ENCODE measurements at regions of chr1 and their contacts with region 1.

Region 1: GRCh38 chr1:156096640-156097391 is 14.6 kb upstream of the MEX3A start:
- DNase-seq: peak; percentile 85
- ATAC-seq: peak; percentile 86
- H3K4me3 Mint-ChIP-seq: peak overlapping the region; percentile 75
- H3K27ac Mint-ChIP-seq: peak overlapping the region; percentile 99
- H3K4me1 Mint-ChIP-seq: peaks cover 36% of the 10 kb centered on the region
- H3K27me3 Mint-ChIP-seq: no peaks in the 10 kb centered on the region
- CTCF ChIP-seq: no peak

Region 2: DNA sequence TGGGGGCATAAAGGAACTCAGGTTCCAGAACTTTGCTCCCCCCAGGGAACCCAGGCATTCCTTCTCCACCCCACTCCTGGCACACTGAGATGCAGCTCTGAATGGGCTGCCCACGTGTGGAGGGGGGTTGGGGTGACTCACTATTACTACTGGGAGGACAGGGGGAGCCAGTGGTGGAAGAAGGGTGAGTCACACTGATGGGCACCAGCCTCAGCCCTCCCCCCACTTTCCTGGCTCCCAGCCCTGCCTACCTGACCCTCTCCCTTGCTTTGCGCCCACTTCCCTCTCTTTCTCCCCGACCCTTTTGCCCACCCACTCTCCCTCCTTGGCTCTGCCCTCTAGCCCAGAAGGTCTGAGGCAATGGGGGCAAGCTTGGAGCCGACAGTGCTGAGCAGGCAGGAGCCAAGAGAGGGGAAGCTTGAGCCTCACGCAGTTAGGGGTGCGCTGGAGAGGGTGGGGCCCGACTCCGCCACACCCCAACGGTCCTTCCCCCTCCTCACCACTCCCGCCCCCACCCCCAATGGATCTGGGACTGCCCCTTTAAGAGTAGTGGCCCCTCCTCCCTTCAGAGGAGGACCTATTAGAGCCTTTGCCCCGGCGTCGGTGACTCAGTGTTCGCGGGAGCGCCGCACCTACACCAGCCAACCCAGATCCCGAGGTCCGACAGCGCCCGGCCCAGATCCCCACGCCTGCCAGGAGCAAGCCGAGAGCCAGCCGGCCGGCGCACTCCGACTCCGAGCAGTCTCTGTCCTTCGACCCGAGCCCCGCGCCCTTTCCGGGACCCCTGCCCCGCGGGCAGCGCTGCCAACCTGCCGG is 17.5 kb after region 1 on chr1 and contains the start of gene LMNA:
- CTCF ChIA-PET with region 1: interaction called, 17 read pairs
- POLR2A ChIA-PET with region 1: interaction called, 78 read pairs
- intact Hi-C with region 1: loop called (anchors 1 kb)
- DNase-seq: peak; percentile 65
- ATAC-seq: peak; percentile 84
- H3K4me3 Mint-ChIP-seq: peak within 1 kb of the TSS; percentile 86
- H3K27ac Mint-ChIP-seq: peak within 1 kb of the TSS; percentile 77
- H3K4me1 Mint-ChIP-seq: peaks cover 33% of the 10 kb centered on the region
- H3K27me3 Mint-ChIP-seq: peaks cover 13% of the 10 kb centered on the region
- CTCF ChIP-seq: no peak
- total RNA-seq, gene LMNA: 40.4 and 47.5 TPM in 2 replicates

Region 3: GRCh38 chr1:156123356-156124196 is 26.8 kb after region 1 on chr1:
- CTCF ChIA-PET with region 1: interaction called, 422 read pairs
- POLR2A ChIA-PET with region 1: interaction called, 154 read pairs
- intact Hi-C with region 1: loop called (anchors 1 kb)
- DNase-seq: peak; percentile 41
- ATAC-seq: peak; percentile 10
- H3K4me3 Mint-ChIP-seq: no peak overlapping the region
- H3K27ac Mint-ChIP-seq: no peak overlapping the region
- H3K4me1 Mint-ChIP-seq: peaks cover 46% of the 10 kb centered on the region
- H3K27me3 Mint-ChIP-seq: peaks cover 4% of the 10 kb centered on the region
- CTCF ChIP-seq: no peak

Region 4: DNA sequence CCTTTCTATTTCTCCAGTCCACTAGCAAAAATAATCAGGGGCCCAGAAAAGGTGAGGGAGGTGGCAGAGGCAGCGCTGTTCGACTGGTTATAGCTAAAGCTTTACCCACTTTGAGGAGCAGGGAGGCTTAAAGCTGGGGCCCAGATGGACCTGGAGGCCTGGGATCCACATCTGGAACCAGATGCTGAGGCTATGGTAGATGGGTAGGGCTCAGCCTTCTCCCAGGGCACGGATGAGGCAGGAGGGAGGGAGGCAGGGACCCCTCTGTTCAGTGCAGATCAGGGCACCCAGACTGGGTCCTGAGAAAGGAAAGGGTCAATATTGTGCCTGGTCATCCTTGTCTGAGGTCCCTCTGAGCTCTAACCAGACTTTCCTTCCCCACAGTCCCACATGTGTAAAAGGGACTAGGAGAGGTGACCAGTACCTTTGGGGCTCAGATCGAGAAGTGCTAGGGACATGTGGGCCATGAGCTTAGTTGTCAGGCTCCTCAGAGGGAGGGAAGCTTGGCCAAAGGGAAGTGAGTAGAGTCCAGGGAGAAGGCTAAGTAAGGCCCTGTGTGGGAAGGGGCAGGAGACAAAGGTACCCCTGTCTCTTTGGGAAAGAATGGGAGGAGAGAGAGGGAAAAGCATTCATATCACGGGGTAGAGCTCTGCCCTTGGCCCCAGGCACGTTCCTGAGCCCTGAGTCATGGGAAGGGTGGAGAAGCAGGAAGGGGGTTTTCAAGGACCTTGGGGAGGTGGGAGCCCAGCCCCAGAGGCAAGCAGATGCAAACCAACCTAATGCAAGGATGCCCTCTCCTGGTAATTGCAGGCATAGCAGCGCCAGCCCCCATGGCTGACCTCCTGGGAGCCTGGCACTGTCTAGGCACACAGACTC is 33.1 kb after region 1 on chr1:
- CTCF ChIA-PET with region 1: interaction called, 422 read pairs
- POLR2A ChIA-PET with region 1: interaction called, 154 read pairs
- intact Hi-C with region 1: loop called (anchors 1 kb)
- DNase-seq: peak; percentile 77
- ATAC-seq: peak; percentile 53
- H3K4me3 Mint-ChIP-seq: no peak overlapping the region
- H3K27ac Mint-ChIP-seq: no peak overlapping the region
- H3K4me1 Mint-ChIP-seq: peaks cover 28% of the 10 kb centered on the region
- H3K27me3 Mint-ChIP-seq: peaks cover 2% of the 10 kb centered on the region
- CTCF ChIP-seq: peak; percentile 71

Region 5: GRCh38 chr1:157523774-157524493 is 1427.1 kb after region 1 on chr1:
- CTCF ChIA-PET with region 1: no interaction called
- POLR2A ChIA-PET with region 1: no interaction called
- intact Hi-C with region 1: no loop called
- DNase-seq: no peak
- ATAC-seq: no peak
- H3K4me3 Mint-ChIP-seq: peak overlapping the region; percentile 42
- H3K27ac Mint-ChIP-seq: peak overlapping the region; percentile 62
- H3K4me1 Mint-ChIP-seq: peaks cover 21% of the 10 kb centered on the region
- H3K27me3 Mint-ChIP-seq: no peaks in the 10 kb centered on the region
- CTCF ChIP-seq: no peak

Measured in activated B cell treated with CpG ODN at 0.5 μM for 24 hours (primary cell).